Activated T-helper 2 cell treated with anti-CD3 and anti-CD28 coated beads, Interferon-gamma antibody, Interleukin-2, Interleukin-4, amounts not matched to agents 10 μg/mL and 5 μg/mL and 100 μg/mL, durations not matched to agents 14 hours and 24 hours and 36 hours (primary cell): ENCODE measurements at regions of chr22 and their contacts with region 1.

Region 1: GRCh38 chr22:46592390-46592872 is 27.8 kb upstream of the GRAMD4 start:
- DNase-seq: peak; percentile 52
- H3K4me3 Mint-ChIP-seq: peak overlapping the region; percentile 70
- H3K27ac Mint-ChIP-seq: peak overlapping the region; percentile 94
- H3K4me1 Mint-ChIP-seq: peaks cover 29% of the 10 kb centered on the region
- H3K27me3 Mint-ChIP-seq: no peaks in the 10 kb centered on the region

Region 2: GRCh38 chr22:46604306-46604690 is 11.9 kb after region 1 on chr22:
- intact Hi-C with region 1: loop called (anchors 1 kb)
- DNase-seq: peak; percentile 73
- H3K4me3 Mint-ChIP-seq: peak overlapping the region; percentile 80
- H3K27ac Mint-ChIP-seq: peak overlapping the region; percentile 98
- H3K4me1 Mint-ChIP-seq: peaks cover 14% of the 10 kb centered on the region
- H3K27me3 Mint-ChIP-seq: no peaks in the 10 kb centered on the region